Activated CD8-positive, alpha-beta T cell treated with anti-CD3 and anti-CD28 coated beads, Interleukin-2, amount 10 ng/mL, durations not matched to agents 7 days and 5 days (primary cell): ENCODE measurements at regions of chr12 and their contacts with region 1.

Region 1: DNA sequence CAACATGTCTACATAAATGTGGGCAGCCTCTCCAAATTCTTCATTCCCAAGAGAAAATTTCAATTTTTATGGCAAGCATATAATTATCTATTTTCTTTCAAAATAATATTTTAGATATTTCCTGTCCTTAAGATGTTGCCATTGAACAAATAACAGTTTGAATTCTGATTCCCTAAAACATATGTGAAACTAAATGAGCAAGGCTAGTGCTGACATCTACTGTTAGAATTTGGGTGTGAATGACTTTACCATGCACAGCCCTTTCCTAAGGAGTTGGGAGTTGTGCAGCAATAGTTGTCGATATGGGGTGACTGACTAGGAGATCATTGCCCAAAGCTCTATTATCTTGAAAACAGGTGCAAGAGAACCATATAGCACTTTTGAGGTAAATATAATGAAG is 108.2 kb upstream of the SLC38A4 start:
- DNase-seq: no peak
- ATAC-seq: no peak
- H3K4me3 Mint-ChIP-seq: no peak overlapping the region
- H3K27ac Mint-ChIP-seq: no peak overlapping the region
- H3K4me1 Mint-ChIP-seq: no peaks in the 10 kb centered on the region
- H3K27me3 Mint-ChIP-seq: peaks cover 29% of the 10 kb centered on the region

Region 2: DNA sequence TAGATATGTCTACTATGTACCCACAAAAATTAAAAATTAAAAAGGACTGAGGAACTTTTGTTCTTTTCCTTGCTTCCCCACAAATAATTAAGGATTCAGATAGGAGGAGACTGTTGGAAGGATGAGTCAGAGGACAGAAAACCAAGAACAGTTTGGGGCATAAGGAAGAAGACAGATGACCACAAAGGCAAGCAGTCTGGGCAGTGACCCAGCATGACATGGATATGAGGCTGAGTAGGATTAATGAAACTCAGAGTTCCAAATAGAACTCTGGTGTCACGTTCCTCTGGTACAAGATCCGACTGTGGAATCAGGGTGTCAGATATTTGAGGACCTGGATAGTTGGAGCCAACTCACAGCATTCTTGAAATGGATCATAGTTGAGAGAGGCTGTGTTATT is 18.9 kb before region 1 on chr12:
- CTCF ChIA-PET with region 1: no interaction called
- POLR2A ChIA-PET with region 1: no interaction called
- DNase-seq: no peak
- ATAC-seq: no peak
- H3K4me3 Mint-ChIP-seq: no peak overlapping the region
- H3K27ac Mint-ChIP-seq: no peak overlapping the region
- H3K4me1 Mint-ChIP-seq: no peaks in the 10 kb centered on the region
- H3K27me3 Mint-ChIP-seq: peaks cover 15% of the 10 kb centered on the region

Region 3: DNA sequence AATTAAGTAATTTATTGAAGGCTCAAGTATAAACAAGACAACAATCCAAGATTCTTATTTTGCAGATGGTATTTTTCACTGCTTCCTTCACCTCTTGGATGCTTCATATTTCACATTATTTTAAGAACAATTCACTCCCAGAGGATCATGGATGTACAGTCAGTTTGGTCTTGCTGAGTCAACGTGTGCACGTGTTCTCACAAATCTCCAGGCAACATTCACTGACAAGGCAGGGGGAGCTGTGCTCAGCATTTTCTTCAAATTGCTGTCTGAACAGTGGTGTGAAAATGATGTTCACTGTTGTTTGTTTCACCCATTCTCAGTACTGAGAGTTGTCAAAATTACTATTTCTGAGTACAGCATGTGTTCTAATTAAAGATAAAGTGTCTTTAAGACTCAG is 10.1 kb after region 1 on chr12:
- CTCF ChIA-PET with region 1: no interaction called
- POLR2A ChIA-PET with region 1: no interaction called
- DNase-seq: no peak
- ATAC-seq: no peak
- H3K4me3 Mint-ChIP-seq: no peak overlapping the region
- H3K27ac Mint-ChIP-seq: no peak overlapping the region
- H3K4me1 Mint-ChIP-seq: no peaks in the 10 kb centered on the region
- H3K27me3 Mint-ChIP-seq: no peaks in the 10 kb centered on the region

Region 4: GRCh38 chr12:47021298-47021697 is 87.4 kb after region 1 on chr12:
- CTCF ChIA-PET with region 1: interaction called, 11 read pairs
- POLR2A ChIA-PET with region 1: no interaction called
- DNase-seq: peak; percentile 41
- ATAC-seq: peak; percentile 53
- H3K4me3 Mint-ChIP-seq: no peak overlapping the region
- H3K27ac Mint-ChIP-seq: no peak overlapping the region
- H3K4me1 Mint-ChIP-seq: no peaks in the 10 kb centered on the region
- H3K27me3 Mint-ChIP-seq: peaks cover 34% of the 10 kb centered on the region